ENCODE measurements at regions of chr2 and their contacts with region 1.

Region 1: DNA sequence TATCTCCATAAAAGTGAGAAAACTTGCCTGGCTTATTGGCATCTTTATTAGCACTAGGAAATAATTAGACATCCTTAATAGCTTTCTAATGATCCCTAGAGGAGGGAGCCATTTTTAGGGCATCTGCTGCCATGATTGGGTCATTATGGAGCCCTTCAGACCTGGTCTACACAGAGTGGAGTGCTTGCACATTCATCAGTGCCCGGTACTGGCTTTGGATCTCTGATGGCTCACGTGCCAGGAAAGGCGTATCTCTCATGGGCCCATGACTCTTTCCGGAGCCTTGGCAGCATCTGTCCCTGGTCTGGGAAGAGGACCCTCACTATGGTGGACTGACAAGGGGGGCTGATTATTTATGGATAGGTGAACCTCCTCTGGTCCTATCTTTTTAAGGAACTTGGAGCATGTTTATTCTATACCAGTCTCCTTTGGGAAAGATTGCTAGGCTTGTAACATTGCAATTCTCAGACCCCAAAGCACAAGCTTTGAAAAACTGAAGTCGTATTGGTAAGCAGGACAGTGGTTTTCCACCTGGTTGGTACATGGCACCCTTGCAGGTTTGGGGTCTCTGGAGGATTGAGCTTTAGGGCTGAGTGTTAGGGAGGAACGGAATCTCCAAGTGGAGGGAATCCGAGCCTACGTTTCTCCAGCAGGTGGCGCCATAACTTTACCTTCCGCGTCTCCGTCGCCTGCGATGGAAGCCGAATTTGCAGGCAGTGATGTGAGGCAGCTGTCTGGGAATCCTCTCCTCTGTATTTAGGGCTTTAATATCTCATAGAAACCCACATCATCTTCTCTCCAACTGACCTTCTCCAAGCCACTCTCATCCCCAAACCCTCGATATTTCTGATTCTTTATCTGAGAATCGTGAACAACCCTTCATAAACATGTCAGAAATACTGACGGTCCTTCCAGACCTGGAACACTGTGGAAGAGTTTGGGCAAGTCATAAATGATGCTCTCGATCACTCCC is 27.8 kb downstream of the SIX2 start:
- DNase-seq: peak; percentile 80
- H3K4me3 Mint-ChIP-seq: no peak overlapping the region
- H3K27ac Mint-ChIP-seq: no peak overlapping the region
- H3K4me1 Mint-ChIP-seq: no peaks in the 10 kb centered on the region
- H3K27me3 Mint-ChIP-seq: peaks cover 14% of the 10 kb centered on the region

Region 2: DNA sequence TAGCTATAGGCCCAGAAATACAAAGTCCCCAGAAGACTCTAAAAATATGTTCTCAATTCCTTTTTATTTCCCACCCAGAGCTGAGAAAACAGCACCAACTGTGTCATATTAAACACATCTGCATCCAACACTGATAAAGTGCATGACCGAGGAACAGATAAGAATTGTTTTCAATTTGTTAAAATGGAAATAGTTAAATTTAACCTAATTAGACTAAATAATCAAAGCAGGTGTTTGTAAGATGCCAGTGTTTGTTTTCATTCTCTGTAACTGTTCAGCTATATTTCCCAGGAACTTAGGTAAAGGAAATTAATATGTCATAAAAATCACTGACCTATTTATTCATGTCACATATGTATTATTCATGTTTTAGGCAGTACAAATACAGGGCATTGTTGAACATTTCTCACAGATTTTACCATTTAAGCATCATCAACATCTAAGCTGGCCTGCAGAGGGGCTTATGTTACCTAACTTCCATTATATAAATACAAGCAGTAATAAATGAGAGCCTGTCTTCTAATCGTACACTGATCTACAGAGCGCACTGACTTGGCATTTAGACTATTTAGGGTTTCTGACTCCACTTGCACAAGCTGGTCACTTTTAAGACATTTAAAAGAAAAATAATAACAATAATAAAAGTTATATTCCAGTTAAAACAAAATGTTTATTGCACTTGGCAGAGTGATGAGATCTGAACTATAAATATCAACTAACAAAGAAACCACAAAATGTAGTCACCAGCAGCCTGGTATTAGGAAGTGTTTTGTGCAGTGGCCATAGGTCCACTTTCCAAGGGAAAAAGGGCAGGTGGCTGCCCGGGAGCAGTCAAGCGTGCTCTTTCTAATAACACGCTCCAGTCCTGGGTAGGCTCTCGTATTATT is 1668.4 kb before region 1 on chr2:
- CTCF ChIA-PET with region 1: no interaction called
- intact Hi-C with region 1: no loop called
- DNase-seq: no peak
- H3K4me3 Mint-ChIP-seq: no peak overlapping the region
- H3K27ac Mint-ChIP-seq: no peak overlapping the region
- H3K4me1 Mint-ChIP-seq: peaks cover 21% of the 10 kb centered on the region
- H3K27me3 Mint-ChIP-seq: no peaks in the 10 kb centered on the region

Region 3: DNA sequence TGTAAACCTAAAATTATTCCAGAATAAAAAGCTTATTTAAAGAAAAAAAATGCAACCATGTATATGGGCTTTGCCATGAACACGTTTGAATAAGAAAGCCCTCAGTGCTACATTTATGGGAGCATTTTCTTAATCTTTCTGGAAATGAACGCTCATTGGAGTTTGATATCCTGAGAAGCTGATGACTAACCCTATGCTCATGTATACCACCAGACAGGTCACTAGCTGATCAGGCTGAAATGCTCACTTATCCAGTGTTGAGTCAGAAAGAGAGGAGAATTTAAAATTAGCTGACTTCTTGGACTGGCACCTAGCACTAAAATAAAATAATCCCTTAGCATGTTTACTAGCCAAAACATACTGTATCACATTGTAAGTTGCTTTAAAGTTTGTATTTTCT is 294.9 kb before region 1 on chr2:
- CTCF ChIA-PET with region 1: no interaction called
- intact Hi-C with region 1: no loop called
- DNase-seq: no peak
- H3K4me3 Mint-ChIP-seq: no peak overlapping the region
- H3K27ac Mint-ChIP-seq: no peak overlapping the region
- H3K4me1 Mint-ChIP-seq: no peaks in the 10 kb centered on the region
- H3K27me3 Mint-ChIP-seq: no peaks in the 10 kb centered on the region

Region 4: GRCh38 chr2:45009303-45009927 is 28.0 kb after region 1 on chr2 and contains the start of gene SIX2:
- CTCF ChIA-PET with region 1: interaction called, 5 read pairs
- intact Hi-C with region 1: loop called (anchors 2 kb)
- DNase-seq: no peak
- H3K4me3 Mint-ChIP-seq: peak within 1 kb of the TSS; percentile 59
- H3K27ac Mint-ChIP-seq: no peak within 1 kb of the TSS
- H3K4me1 Mint-ChIP-seq: peaks cover 30% of the 10 kb centered on the region
- H3K27me3 Mint-ChIP-seq: peaks cover 71% of the 10 kb centered on the region
- total RNA-seq, gene SIX2: not detected

Region 5: DNA sequence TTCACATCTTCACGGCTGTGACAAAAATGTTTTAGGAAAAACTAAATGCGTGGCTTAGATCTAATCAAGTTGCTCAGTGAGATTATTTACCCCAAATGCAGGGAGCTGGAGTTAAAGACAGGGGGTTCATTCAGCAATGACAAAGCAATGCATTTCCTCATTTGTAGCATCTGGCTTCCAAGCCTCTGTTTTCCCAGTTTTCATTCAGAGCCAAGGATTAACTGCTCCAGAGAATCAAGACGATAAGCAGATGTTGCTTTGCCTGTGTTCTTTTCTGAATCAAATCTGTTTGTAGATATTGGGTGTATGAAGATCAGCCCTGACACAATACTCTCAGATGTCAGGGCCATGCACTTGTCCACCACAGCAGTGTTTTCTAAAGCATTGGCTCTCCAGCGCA is 175.2 kb after region 1 on chr2:
- CTCF ChIA-PET with region 1: no interaction called
- intact Hi-C with region 1: no loop called
- DNase-seq: no peak
- H3K4me3 Mint-ChIP-seq: no peak overlapping the region
- H3K27ac Mint-ChIP-seq: no peak overlapping the region
- H3K4me1 Mint-ChIP-seq: no peaks in the 10 kb centered on the region
- H3K27me3 Mint-ChIP-seq: peaks cover 12% of the 10 kb centered on the region

Region 6: DNA sequence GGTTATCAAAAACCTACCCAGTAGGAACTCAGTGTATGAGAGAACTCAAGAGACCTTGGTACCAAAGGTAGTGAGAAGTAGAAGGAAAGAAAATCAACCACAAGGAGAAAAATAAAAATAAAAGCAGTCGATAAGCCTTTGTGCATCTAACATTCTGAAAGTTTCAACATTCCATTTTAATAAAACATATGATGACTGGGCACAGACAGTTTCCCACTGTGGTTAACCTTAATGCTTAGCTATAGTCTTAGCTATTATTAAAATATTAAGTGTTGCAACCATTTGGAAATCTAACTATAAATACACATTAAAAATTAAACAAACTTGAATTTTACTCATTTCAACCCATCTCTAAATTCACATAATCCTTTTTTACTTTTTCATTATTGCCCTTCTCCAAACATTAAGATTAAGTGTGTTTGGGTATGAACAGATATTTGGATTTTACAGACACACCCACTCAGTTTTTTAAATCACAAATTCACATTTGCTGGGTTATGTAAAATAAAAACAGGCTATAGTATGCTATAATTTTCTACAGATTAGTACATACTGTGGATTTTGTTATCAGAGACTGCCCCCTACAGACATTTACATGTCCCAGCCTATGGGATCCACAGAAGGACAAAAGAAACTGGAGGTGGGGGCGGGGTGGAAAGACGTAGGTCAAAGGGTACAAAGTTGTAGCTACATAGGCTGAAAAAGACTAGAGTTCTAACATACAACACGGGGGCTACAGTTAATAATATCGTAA is 596.8 kb after region 1 on chr2:
- CTCF ChIA-PET with region 1: interaction called, 4 read pairs
- intact Hi-C with region 1: loop called (anchors 1 kb)
- DNase-seq: peak; percentile 40
- H3K4me3 Mint-ChIP-seq: no peak overlapping the region
- H3K27ac Mint-ChIP-seq: no peak overlapping the region
- H3K4me1 Mint-ChIP-seq: peaks cover 2% of the 10 kb centered on the region
- H3K27me3 Mint-ChIP-seq: no peaks in the 10 kb centered on the region

Region 7: DNA sequence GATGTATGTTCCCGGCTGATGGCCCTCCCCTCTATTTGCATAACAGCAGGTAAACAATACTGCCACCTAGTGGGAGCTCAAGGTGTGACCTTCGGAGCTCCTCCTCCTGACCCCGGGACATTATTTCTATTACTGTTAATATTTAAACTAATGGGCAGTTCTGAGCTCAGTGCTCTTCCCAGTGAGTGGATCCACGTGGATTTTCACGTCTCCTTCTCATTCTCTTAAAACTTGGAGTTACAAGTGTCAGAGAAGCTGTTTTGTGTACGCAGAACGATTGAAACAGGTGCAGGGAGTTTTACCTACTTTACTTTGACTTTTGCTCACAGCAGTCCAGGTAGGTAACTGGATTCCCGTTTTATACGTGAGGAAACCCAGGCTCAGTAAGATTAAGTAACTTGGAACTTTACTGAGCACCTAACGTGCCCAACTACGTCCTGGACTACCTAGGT is 797.3 kb after region 1 on chr2:
- CTCF ChIA-PET with region 1: no interaction called
- intact Hi-C with region 1: loop called (anchors 5 kb)
- DNase-seq: peak; percentile 82
- H3K4me3 Mint-ChIP-seq: no peak overlapping the region
- H3K27ac Mint-ChIP-seq: no peak overlapping the region
- H3K4me1 Mint-ChIP-seq: peaks cover 3% of the 10 kb centered on the region
- H3K27me3 Mint-ChIP-seq: no peaks in the 10 kb centered on the region